Activated CD4-positive, alpha-beta T cell treated with anti-CD3 and anti-CD28 coated beads, Interleukin-2, amount 10 ng/mL, durations not matched to agents 24 days and 14 days (primary cell): ENCODE measurements at regions of chr12 and their contacts with region 1.

Region 1: DNA sequence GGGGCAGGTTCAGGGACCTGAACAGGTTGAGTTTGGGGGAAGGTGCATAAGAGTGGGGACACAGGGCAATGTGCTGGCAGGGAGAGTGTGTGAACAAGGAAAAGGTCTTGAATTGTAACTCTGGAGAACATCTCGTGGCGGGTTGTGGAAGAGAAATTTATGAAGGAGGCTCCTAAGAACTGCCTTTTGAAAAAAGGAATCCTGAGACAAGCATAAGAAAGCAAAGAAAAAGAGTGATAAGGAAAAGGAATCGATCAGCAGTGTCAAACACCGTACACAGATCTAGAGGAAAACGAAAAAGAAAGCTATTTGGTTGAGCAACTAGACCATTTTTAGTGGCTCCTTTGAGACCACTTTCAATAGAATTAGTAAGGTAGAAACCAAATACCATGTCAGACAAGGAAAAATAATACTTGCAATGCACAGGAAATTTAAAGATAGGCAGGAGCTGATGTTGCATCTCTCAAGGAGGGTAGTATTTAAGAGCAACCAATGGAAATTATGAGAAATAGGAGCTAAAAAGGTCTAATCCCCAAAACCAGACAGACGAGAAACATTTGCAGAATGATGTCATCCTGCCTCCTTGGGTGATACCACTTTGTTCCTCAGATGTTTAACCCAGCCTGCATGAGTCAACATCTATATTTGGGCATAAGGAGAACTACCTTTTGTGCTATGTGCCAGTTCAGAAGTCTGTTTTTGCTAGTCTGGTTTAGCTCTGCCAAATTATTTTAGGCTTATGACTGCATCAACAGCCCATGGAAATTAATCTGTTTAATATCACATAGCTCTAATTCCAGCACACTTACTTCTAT is 64.5 kb upstream of the STK38L start:
- DNase-seq: peak; percentile 80
- H3K4me3 Mint-ChIP-seq: peak overlapping the region; percentile 61
- H3K27ac Mint-ChIP-seq: peak overlapping the region; percentile 87
- H3K4me1 Mint-ChIP-seq: peaks cover 39% of the 10 kb centered on the region
- H3K27me3 Mint-ChIP-seq: no peaks in the 10 kb centered on the region

Region 2: DNA sequence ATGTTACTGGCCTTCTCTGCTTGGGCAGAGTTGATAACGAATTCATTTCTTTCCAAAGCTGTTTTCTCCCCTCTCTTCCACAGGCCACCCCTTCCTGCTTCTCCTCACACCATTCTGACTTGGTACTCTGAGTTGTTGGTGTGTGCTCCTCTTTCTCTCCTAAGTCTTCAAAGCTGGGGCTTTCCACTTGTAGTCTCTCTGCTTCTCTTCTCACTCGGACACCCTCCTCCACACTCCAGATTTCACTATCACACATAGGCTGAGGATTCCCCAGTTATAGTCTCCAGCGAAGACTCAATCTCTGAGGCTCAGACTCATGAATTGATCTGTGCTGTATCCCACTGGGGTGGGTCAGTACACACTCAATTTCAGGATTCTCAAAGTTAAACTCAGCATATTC is 783.2 kb before region 1 on chr12:
- intact Hi-C with region 1: no loop called
- DNase-seq: no peak
- H3K4me3 Mint-ChIP-seq: no peak overlapping the region
- H3K27ac Mint-ChIP-seq: no peak overlapping the region
- H3K4me1 Mint-ChIP-seq: no peaks in the 10 kb centered on the region
- H3K27me3 Mint-ChIP-seq: no peaks in the 10 kb centered on the region

Region 3: DNA sequence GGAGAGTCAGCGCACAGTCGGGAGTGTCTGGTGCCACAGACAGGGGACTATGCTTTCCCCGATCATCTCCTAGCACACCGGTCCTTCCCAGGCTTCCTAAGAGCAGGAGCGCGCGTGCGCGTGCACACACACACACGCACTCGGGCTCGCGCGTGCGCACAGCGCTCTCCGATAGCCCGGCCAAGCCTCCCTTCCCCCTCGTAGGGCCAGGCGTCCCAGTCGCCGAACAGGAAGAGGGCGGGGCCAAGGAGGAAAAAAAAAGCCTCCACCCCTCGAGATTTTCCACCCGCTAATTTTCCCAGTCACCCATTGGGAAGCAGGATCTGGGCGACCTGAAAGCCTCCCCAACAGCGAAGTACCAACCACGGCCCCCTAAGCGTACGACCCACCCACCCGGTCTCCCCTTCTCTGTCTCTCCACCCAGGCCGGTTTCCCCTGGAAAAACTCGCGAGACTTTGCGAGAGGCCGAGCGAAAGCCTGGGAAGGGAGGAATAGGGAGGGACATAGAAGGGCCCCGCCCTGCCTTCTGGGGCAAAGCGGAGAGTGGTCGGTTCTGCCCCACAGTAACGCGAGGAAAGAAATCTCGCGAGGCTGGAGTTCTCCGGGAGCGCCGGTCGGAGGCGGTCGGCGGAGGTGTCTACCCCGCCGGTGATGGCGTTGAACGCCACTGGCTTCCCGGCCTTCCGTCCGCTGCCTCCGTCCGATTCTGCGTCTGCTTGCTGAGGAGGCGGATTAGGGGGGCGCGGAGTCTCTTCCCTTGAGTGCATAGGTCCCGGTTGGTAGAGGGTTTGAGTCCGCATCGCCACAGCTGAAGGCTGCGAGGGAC is 241.5 kb before region 1 on chr12 and contains the starts of genes FGFR1OP2 and INTS13:
- intact Hi-C with region 1: no loop called
- DNase-seq: peak; percentile 99
- H3K4me3 Mint-ChIP-seq: peak within 1 kb of the TSS; percentile 94
- H3K27ac Mint-ChIP-seq: peak within 1 kb of the TSS; percentile 97
- H3K4me1 Mint-ChIP-seq: peaks cover 55% of the 10 kb centered on the region
- H3K27me3 Mint-ChIP-seq: no peaks in the 10 kb centered on the region
- total RNA-seq, gene FGFR1OP2: 45.7 and 46.7 TPM in 2 replicates
- total RNA-seq, gene INTS13: 49.7 and 51.3 TPM in 2 replicates

Region 4: DNA sequence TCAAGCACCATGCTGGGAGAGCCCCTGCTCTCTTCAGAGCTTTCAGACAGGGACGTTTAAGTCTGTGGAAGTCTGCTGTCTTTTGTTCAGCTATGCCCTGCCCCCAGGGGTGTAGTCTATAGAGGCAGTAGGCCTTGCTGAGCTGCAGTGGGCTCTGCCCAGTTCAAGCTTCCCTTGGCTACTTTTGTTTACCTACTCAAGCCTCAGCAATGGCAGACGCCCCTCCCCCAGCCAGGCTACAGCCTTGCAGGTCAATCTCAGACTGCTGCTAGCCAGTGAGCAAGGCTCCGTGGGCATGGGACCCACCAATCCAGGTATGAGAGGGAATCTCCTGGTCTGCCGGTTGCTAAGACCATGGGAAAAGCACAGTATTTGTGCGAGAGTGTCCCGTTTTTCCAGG is 59.8 kb before region 1 on chr12:
- intact Hi-C with region 1: no loop called
- DNase-seq: no peak
- H3K4me3 Mint-ChIP-seq: no peak overlapping the region
- H3K27ac Mint-ChIP-seq: no peak overlapping the region
- H3K4me1 Mint-ChIP-seq: peaks cover 2% of the 10 kb centered on the region
- H3K27me3 Mint-ChIP-seq: peaks cover 4% of the 10 kb centered on the region

Region 5: DNA sequence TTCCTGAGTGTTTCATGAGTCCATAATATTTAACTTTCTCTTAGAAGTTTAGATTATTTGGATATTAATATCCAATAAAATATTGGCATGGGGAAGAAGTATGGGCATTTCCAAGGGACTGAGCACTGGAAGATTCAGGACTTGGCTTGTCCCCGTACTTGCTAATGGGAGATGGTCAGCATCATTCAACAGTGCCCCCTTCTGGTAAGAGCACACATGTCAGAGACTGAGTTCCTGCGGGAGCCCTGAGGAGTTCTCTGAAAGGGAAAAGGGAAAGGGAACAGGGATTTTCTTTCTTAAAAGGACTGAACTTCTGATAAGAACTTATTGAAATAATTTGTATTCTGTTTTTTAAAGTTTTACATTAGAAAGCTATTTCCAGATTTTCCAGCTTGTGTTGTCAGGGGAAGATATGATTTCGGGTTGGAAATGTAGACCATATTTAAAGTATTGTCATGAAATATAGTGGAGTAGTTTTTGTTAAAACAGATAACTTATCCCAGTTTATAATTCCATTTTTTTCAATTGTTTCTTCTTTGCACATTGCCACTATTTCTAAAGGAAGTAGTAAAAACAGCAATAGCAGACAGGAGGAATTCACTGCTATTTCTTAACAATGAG is 37.4 kb before region 1 on chr12:
- intact Hi-C with region 1: loop called (anchors 2 kb)
- DNase-seq: peak; percentile 81
- H3K4me3 Mint-ChIP-seq: no peak overlapping the region
- H3K27ac Mint-ChIP-seq: peak overlapping the region; percentile 1
- H3K4me1 Mint-ChIP-seq: peaks cover 17% of the 10 kb centered on the region
- H3K27me3 Mint-ChIP-seq: peaks cover 2% of the 10 kb centered on the region

Region 6: GRCh38 chr12:27207615-27208413 is 28.2 kb after region 1 on chr12:
- intact Hi-C with region 1: loop called (anchors 1 kb)
- DNase-seq: peak; percentile 76
- H3K4me3 Mint-ChIP-seq: no peak overlapping the region
- H3K27ac Mint-ChIP-seq: peak overlapping the region; percentile 47
- H3K4me1 Mint-ChIP-seq: peaks cover 21% of the 10 kb centered on the region
- H3K27me3 Mint-ChIP-seq: no peaks in the 10 kb centered on the region

Region 7: GRCh38 chr12:27220057-27220987 is 40.7 kb after region 1 on chr12:
- intact Hi-C with region 1: loop called (anchors 1 kb)
- DNase-seq: no peak
- H3K4me3 Mint-ChIP-seq: peak overlapping the region; percentile 1
- H3K27ac Mint-ChIP-seq: peak overlapping the region; percentile 49
- H3K4me1 Mint-ChIP-seq: peaks cover 11% of the 10 kb centered on the region
- H3K27me3 Mint-ChIP-seq: peaks cover 5% of the 10 kb centered on the region

Region 8: GRCh38 chr12:27237790-27238771 is 58.5 kb after region 1 on chr12:
- intact Hi-C with region 1: loop called (anchors 2 kb)
- DNase-seq: peak; percentile 71
- H3K4me3 Mint-ChIP-seq: peak overlapping the region; percentile 4
- H3K27ac Mint-ChIP-seq: peak overlapping the region; percentile 73
- H3K4me1 Mint-ChIP-seq: peaks cover 25% of the 10 kb centered on the region
- H3K27me3 Mint-ChIP-seq: no peaks in the 10 kb centered on the region